Left ventricle myocardium inferior (tissue), 1 donor: ENCODE measurements at regions of chr10 and their contacts with region 1.

Region 1: DNA sequence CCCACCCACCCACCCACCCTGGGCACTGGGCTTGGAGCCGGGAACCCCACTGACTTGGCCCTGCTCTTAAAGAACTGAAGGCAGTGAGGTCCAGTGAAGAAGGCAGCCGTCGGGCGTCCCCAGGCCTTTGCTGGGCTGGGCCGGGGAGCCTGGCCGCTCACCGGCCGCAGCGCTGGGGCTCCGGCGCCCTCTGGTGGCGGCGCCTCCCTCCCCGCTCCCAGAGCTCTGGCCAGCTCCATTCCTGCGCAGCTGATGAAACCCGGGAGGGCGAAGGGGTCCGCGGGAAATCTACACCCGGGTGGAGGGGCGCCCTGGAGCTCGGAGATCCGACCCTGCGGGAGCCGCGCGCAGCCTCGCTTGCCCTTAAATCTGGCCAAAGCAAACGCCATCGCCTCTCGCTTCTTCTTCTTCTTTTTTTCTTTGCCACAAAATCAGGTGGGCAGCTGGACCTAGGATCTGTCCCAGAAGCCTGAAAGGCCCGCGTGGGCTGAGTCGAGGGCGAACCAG is 1.7 kb upstream of the CXCL12 start:
- DNase-seq: peak; percentile 72
- H3K4me3 ChIP-seq: peak overlapping the region; percentile 93
- H3K27ac ChIP-seq: peak overlapping the region; percentile 80
- H3K4me1 ChIP-seq: peaks cover 60% of the 10 kb centered on the region
- H3K27me3 ChIP-seq: peaks cover 16% of the 10 kb centered on the region
- CTCF ChIP-seq: peak; percentile 95

Region 2: GRCh38 chr10:43671656-43672531 is 714.7 kb before region 1 on chr10:
- intact Hi-C with region 1: loop called (anchors 5 kb)
- DNase-seq: no peak
- H3K4me3 ChIP-seq: no peak overlapping the region
- H3K27ac ChIP-seq: peak overlapping the region; percentile 15
- H3K4me1 ChIP-seq: peaks cover 15% of the 10 kb centered on the region
- H3K27me3 ChIP-seq: peaks cover 39% of the 10 kb centered on the region
- CTCF ChIP-seq: peak; percentile 83

Region 3: GRCh38 chr10:43998021-43998809 is 388.4 kb before region 1 on chr10:
- intact Hi-C with region 1: no loop called
- DNase-seq: no peak
- H3K4me3 ChIP-seq: no peak overlapping the region
- H3K27ac ChIP-seq: peak overlapping the region; percentile 57
- H3K4me1 ChIP-seq: peaks cover 21% of the 10 kb centered on the region
- H3K27me3 ChIP-seq: no peaks in the 10 kb centered on the region
- CTCF ChIP-seq: no peak

Region 4: GRCh38 chr10:44281089-44281613 is 105.4 kb before region 1 on chr10:
- intact Hi-C with region 1: no loop called
- DNase-seq: peak; percentile 57
- H3K4me3 ChIP-seq: no peak overlapping the region
- H3K27ac ChIP-seq: peak overlapping the region; percentile 54
- H3K4me1 ChIP-seq: peaks cover 22% of the 10 kb centered on the region
- H3K27me3 ChIP-seq: no peaks in the 10 kb centered on the region
- CTCF ChIP-seq: no peak

Region 5: DNA sequence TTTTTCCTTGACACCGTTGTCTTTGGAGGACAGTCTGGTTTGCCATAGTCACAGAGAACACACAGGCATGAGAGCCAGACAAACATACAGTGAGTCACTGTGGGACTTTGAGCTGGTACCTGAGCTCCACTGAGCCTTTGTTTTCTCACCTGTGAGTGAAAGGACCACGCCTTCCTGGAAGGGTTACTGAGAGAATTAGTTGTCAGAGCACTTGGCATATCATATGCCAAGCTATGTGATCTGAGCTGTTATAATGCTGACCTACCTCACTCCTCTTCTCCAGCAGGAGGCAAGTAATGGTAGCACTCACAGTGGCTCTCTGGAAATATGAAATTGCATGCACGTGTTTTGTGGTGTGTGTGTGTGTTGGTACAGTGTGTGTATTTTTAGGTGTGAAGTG is 61.4 kb before region 1 on chr10:
- intact Hi-C with region 1: no loop called
- DNase-seq: no peak
- H3K4me3 ChIP-seq: no peak overlapping the region
- H3K27ac ChIP-seq: no peak overlapping the region
- H3K4me1 ChIP-seq: peaks cover 17% of the 10 kb centered on the region
- H3K27me3 ChIP-seq: no peaks in the 10 kb centered on the region
- CTCF ChIP-seq: no peak

Region 6: GRCh38 chr10:44857363-44858016 is 470.9 kb after region 1 on chr10:
- intact Hi-C with region 1: loop called (anchors 10 kb)
- DNase-seq: peak; percentile 76
- H3K4me3 ChIP-seq: no peak overlapping the region
- H3K27ac ChIP-seq: no peak overlapping the region
- H3K4me1 ChIP-seq: peaks cover 14% of the 10 kb centered on the region
- H3K27me3 ChIP-seq: peaks cover 18% of the 10 kb centered on the region
- CTCF ChIP-seq: peak; percentile 100